ENCODE measurements at regions of chr11 and their contacts with region 1.

Region 1: DNA sequence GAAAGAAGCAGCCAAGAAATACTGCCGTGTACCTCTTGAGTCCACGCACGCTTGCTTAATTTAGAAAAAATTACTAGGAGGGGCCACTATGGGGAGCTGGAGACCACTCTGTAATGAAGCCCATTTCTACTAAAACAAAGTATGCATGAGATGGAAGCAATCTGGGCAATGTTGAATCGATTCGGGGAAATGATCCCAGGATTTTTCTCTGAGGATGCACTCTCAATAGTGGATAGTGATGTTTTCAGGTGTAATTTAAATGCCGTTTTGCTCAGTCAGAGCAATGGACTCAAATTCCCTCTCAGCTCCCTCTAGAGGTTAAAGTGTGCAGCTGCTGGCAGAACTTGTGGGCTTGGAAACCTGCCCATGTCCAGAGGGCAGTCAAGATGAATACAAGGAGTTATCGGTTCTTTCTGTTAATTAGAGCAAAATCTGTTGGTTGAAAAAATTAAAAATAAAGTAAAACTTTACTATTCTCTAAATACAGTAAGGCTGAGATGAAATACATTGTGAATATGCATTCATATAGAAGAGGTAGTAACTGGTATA is 64.1 kb downstream of the ME3 start:
- DNase-seq: peak in 8 of 10 donors; percentile 30 to 86 (median 50)

Region 2: DNA sequence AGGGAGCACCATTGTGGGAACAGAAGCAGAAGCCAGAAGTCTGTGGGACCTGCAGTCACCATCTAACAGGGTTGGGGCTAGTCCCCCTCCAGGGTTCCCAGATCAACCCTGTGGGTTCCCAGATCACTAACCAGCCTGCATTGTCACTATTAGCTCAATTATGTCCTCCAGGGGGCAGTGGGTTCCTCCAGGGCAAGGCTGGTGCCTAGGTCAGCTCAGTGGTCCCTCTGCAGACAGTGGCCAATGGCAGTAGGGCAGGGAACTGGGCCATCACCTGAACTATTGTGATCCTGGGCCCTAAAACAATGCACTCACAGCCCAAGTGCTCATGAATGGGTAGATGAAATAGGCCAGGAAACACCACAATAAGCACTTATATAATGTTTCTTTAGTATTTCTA is 173.2 kb after region 1 on chr11:
- intact Hi-C with region 1: no loop called
- DNase-seq: no peak

Region 3: GRCh38 chr11:86818466-86819192 is 210.3 kb after region 1 on chr11:
- intact Hi-C with region 1: loop called (anchors 10 kb)
- DNase-seq: no peak

Measured in posterior cingulate gyrus (tissue), 11 donors.